ENCODE measurements at regions of chr12 and their contacts with region 1.

Region 1: GRCh38 chr12:45543906-45544315 is 185.6 kb upstream of the ARID2 start:
- DNase-seq: peak; percentile 69
- H3K4me3 ChIP-seq: no peak overlapping the region; a peak in 1 of 4 replicates
- H3K27ac ChIP-seq: no peak overlapping the region
- H3K4me1 ChIP-seq: no peaks in the 10 kb centered on the region; a peak in 1 of 4 replicates
- H3K27me3 ChIP-seq: no peaks in the 10 kb centered on the region
- CTCF ChIP-seq: peak; percentile 78
- EP300 ChIP-seq: no peak
- RAD21 ChIP-seq: peak; percentile 87

Region 2: DNA sequence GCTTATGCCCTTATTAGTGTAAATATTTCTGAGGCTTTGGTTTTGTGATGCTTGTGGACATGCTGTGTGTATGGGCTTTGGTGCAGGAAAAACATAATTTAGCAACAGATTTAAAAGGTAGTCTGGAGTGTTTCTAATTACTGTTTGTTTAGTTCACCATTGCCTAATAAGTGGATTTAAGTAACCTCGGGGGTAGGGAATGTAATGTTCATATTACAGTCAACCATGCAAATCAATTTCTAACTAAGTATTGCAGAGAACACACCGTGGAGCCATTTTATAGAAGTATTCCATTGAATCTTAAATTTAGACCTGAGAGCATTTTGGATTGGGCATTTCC is 274.5 kb before region 1 on chr12:
- CTCF ChIA-PET with region 1: no interaction called
- POLR2A ChIA-PET with region 1: no interaction called
- DNase-seq: no peak
- H3K4me3 ChIP-seq: peak overlapping the region in 1 of 2 experiments; percentile 31; a peak in 1 of 4 replicates
- H3K27ac ChIP-seq: peak overlapping the region; percentile 87 to 93
- H3K4me1 ChIP-seq: peaks cover 19 to 31% of the 10 kb centered on the region in 2 experiments
- H3K27me3 ChIP-seq: no peaks in the 10 kb centered on the region
- CTCF ChIP-seq: no peak
- EP300 ChIP-seq: no peak
- RAD21 ChIP-seq: no peak

Region 3: GRCh38 chr12:45532113-45532512 is 11.8 kb before region 1 on chr12:
- CTCF ChIA-PET with region 1: interaction called, 10 read pairs
- POLR2A ChIA-PET with region 1: no interaction called
- DNase-seq: no peak
- H3K4me3 ChIP-seq: no peak overlapping the region
- H3K27ac ChIP-seq: no peak overlapping the region
- H3K4me1 ChIP-seq: no peaks in the 10 kb centered on the region
- H3K27me3 ChIP-seq: no peaks in the 10 kb centered on the region
- CTCF ChIP-seq: no peak
- EP300 ChIP-seq: no peak
- RAD21 ChIP-seq: no peak

Region 4: DNA sequence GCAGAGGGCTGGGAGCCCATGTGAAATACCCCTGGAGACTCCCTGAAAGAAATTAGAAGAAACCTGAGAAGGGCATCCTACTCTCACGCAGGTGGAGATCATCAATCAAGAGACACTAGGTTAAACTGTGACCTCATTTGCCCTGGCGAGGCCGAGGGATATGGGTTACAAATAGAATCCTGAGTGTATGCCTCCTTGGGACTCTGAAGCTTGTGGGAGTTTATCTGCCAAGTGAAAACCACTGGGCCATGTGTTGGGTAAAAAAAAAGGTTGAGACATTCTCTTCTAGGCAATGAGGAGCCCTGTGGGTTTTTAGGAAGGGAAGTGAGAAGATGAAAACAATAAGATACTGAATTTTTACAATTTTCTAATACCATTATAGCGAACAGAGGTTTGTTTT is 24.9 kb after region 1 on chr12:
- CTCF ChIA-PET with region 1: interaction called, 13 read pairs
- POLR2A ChIA-PET with region 1: no interaction called
- DNase-seq: no peak
- H3K4me3 ChIP-seq: no peak overlapping the region
- H3K27ac ChIP-seq: no peak overlapping the region
- H3K4me1 ChIP-seq: no peaks in the 10 kb centered on the region; a peak in 1 of 4 replicates
- H3K27me3 ChIP-seq: no peaks in the 10 kb centered on the region; the same call in 1 of the 2 replicates
- CTCF ChIP-seq: no peak
- EP300 ChIP-seq: no peak
- RAD21 ChIP-seq: no peak

Measured in SK-N-SH (cell line).